Psoas muscle (tissue), 8 donors: ENCODE measurements at regions of chr5 and their contacts with region 1.

Region 1: GRCh38 chr5:124888050-124888506 is 141.6 kb upstream of the ZNF608 start:
- DNase-seq: no peak
- ATAC-seq: peak; percentile 58 to 78 (median 65)
- H3K4me3 ChIP-seq: peak overlapping the region; percentile 8
- H3K27ac ChIP-seq: peak overlapping the region; percentile 70
- H3K4me1 ChIP-seq: peaks cover 30% of the 10 kb centered on the region
- H3K27me3 ChIP-seq: no peaks in the 10 kb centered on the region
- CTCF ChIP-seq: no peak

Region 2: DNA sequence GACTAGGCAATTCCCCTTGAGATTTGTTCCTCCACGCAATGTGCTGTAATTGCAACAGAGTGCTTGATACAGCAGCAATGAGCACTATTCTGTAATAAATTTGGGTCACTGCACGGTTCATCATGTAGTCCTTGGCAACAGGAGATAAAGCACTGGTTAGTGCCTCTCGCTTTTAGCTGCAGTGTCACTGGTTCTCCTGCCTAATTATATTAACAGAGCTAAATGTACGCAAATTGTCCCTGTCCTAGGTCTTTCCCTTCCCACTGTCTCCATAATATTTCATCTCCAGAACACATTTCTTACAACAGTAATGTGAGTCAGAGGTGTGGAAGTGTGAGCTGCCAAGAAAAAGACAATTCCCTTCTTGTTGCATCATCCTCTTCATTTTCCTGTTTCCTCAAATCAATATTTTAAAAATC is 694.7 kb before region 1 on chr5:
- intact Hi-C with region 1: no loop called
- DNase-seq: no peak
- ATAC-seq: peak in 2 of 4 donors; percentile 32 to 34
- H3K4me3 ChIP-seq: no peak overlapping the region
- H3K27ac ChIP-seq: no peak overlapping the region
- H3K4me1 ChIP-seq: no peaks in the 10 kb centered on the region
- H3K27me3 ChIP-seq: no peaks in the 10 kb centered on the region
- CTCF ChIP-seq: no peak

Region 3: DNA sequence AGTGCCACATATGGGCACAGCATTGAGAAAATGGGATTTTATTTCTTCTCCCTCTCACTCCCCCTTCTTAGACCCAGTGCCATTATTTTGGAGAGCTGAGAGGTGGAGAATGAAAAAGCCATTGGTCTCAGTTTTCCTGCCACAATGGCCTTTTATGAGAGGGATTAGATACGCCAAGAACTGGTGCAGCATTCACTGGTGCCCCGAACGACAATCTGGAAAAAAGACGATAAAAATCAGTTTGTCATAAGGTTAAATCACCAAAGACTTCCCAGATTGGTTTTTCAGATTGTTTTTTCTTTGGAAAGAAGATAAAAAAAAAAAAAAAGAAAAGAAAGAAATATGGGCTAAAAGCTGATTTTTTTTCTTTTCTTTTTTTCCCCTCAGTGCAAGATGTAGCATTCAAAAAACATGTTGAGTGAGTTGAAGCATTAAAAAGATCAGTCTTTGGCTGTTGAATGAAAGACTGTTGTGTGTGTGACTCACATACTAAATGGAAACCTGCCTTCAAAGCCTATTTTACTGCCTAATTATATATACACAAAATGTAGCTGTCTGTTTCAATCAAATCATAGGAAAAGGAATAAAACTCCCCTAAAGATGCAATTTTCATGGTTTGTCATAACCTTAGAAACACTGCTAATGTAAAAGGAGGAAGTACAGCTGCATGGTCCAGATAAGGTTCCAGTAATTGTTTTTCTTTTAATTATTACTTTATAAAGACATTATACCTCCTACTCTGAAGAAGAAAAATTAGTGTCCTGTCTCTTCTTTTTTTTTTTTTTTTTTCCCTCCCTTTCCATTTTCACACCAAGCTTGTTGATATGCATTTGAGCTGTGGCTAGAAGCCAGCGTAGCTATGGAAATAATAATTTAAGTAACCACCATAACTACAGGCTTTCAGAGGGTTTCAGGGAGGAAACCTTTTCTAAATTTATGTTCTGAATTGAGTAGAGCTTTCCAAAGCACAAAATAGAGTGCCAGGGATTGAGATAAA is 114.5 kb before region 1 on chr5:
- intact Hi-C with region 1: loop called in 1 of 2 experiments (anchors 10 kb)
- DNase-seq: no peak
- ATAC-seq: no peak
- H3K4me3 ChIP-seq: no peak overlapping the region
- H3K27ac ChIP-seq: no peak overlapping the region
- H3K4me1 ChIP-seq: no peaks in the 10 kb centered on the region
- H3K27me3 ChIP-seq: no peaks in the 10 kb centered on the region
- CTCF ChIP-seq: no peak

Region 4: GRCh38 chr5:124935065-124935464 is 47.0 kb after region 1 on chr5:
- intact Hi-C with region 1: no loop called
- DNase-seq: no peak
- ATAC-seq: no peak
- H3K4me3 ChIP-seq: no peak overlapping the region
- H3K27ac ChIP-seq: no peak overlapping the region
- H3K4me1 ChIP-seq: no peaks in the 10 kb centered on the region
- H3K27me3 ChIP-seq: no peaks in the 10 kb centered on the region
- CTCF ChIP-seq: no peak